ENCODE measurements at regions of chr12 and their contacts with region 1.

Region 1: DNA sequence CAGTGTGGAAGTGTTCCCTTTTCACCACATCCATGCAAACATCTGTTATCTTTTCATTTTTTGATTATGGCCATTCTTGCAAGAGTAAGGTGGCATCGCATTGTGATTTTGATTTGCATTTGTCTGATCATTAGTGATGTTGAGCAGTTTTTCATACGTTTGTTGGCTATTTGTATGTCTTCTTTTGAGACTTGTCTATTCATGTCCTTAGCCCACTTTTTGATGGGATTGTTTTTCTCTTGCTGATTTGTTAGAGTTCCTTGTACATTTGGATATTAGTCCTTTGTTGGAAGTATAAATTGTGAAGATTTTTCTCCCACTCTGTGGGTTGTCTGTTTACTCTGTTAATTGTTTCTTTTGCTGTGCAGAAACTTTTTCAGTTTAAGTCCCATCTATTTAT is 244.5 kb upstream of the PRICKLE1 start:
- DNase-seq: no peak
- H3K4me3 ChIP-seq: no peak overlapping the region
- H3K27ac ChIP-seq: no peak overlapping the region
- H3K4me1 ChIP-seq: no peaks in the 10 kb centered on the region
- H3K27me3 ChIP-seq: no peaks in the 10 kb centered on the region
- CTCF ChIP-seq: no peak

Region 2: DNA sequence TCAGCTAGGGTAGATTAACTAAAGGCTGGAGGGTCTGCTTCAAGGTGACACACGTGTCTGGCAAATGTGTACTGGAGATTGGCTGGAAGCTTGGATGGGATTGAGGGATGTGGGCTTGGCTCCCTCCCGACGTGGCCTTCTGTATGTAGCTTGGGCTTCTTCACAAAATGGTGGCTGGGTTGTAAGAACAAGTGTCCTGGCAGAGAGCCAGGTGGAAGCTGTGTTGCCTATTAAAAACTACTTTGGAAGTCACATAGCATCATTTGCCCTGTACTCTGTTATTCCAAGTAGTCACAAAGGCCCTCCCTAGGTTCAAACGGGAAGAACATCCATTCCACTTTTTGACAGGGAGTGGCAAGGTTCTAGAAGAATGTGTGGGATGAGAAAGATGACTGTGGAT is 70.4 kb before region 1 on chr12:
- CTCF ChIA-PET with region 1: no interaction called
- POLR2A ChIA-PET with region 1: interaction called, 24 read pairs
- intact Hi-C with region 1: no loop called
- DNase-seq: no peak
- H3K4me3 ChIP-seq: no peak overlapping the region
- H3K27ac ChIP-seq: no peak overlapping the region
- H3K4me1 ChIP-seq: peaks cover 42% of the 10 kb centered on the region
- H3K27me3 ChIP-seq: no peaks in the 10 kb centered on the region
- CTCF ChIP-seq: no peak

Measured in PC-9 (cell line).